ENCODE measurements at regions of chr7 and their contacts with region 1.

Region 1: GRCh38 chr7:42107484-42108245 is 129.3 kb downstream of the GLI3 start:
- DNase-seq: no peak
- H3K4me3 ChIP-seq: no peak overlapping the region
- H3K27ac ChIP-seq: no peak overlapping the region
- H3K4me1 ChIP-seq: no peaks in the 10 kb centered on the region
- CTCF ChIP-seq: no peak

Region 2: GRCh38 chr7:42091461-42092291 is 16.0 kb before region 1 on chr7:
- CTCF ChIA-PET with region 1: no interaction called
- POLR2A ChIA-PET with region 1: no interaction called
- intact Hi-C with region 1: no loop called
- DNase-seq: no peak
- H3K4me3 ChIP-seq: no peak overlapping the region
- H3K27ac ChIP-seq: no peak overlapping the region
- H3K4me1 ChIP-seq: no peaks in the 10 kb centered on the region
- CTCF ChIP-seq: no peak

Region 3: GRCh38 chr7:43764039-43764761 is 1656.5 kb after region 1 on chr7:
- CTCF ChIA-PET with region 1: no interaction called
- POLR2A ChIA-PET with region 1: interaction called, 10 read pairs
- intact Hi-C with region 1: no loop called
- DNase-seq: peak; percentile 4
- H3K4me3 ChIP-seq: no peak overlapping the region
- H3K27ac ChIP-seq: no peak overlapping the region
- H3K4me1 ChIP-seq: peaks cover 6% of the 10 kb centered on the region
- CTCF ChIP-seq: no peak